Activated CD4-positive, alpha-beta memory T cell treated with anti-CD3 and anti-CD28 coated beads for 36 hours (primary cell): ENCODE measurements at regions of chr17 and their contacts with region 1.

Region 1: GRCh38 chr17:81394921-81395599 is at the start of gene BAHCC1:
- DNase-seq: peak; percentile 94
- H3K4me3 Mint-ChIP-seq: peak within 1 kb of the TSS; percentile 53
- H3K27ac Mint-ChIP-seq: peak within 1 kb of the TSS; percentile 73
- H3K4me1 Mint-ChIP-seq: peaks cover 24% of the 10 kb centered on the region
- H3K27me3 Mint-ChIP-seq: peaks cover 48% of the 10 kb centered on the region
- total RNA-seq, gene BAHCC1: 0.10 TPM in 1 of 2 experiments, not detected in the other

Region 2: DNA sequence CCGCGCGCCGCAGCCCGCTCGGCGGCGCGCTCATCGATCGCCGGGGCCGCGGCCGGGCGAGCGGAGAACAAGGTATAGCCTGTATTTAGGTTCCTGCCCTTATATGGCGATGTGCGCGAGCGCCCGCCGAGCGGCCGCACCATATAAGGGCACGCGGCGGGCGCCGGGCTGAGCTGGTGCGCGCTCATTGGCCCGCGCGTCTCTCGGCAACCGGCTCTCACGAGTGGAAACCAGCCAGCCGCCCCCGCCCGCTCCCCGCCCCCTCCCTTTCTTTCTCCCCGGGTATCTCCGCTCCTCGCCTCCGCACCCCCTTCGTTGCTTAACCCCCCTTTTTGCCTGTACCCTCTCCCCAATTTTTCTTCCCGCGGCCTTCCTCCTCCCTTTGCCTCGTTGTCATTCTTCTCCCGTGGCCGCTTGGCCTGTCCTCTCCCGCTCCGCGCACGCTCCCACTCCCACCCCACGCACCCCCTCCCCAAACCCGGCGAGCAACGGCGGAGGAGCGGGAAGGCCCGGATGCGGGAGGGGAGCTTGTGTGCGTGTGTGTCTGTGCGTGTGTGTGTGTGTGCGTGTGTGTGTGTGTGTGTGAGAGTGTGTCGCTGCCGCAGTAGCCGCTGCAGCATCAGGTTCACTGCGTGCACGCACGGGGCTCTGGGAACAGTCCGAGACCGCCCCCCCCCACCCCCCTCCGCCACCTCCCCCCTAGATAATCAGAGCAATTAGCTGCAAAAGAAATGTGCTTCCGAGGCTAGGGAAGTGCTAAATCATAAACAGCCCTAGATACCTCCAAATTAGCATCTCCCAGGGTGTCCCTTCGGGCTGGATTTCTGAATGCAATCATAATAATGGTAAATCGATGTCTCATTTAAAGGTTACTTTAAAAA is 1584.7 kb before region 1 on chr17:
- CTCF ChIA-PET with region 1: no interaction called
- POLR2A ChIA-PET with region 1: no interaction called
- intact Hi-C with region 1: loop called (anchors 5 kb)
- DNase-seq: peak; percentile 87
- H3K4me3 Mint-ChIP-seq: peak overlapping the region; percentile 23
- H3K27ac Mint-ChIP-seq: no peak overlapping the region
- H3K4me1 Mint-ChIP-seq: peaks cover 33% of the 10 kb centered on the region
- H3K27me3 Mint-ChIP-seq: peaks cover 64% of the 10 kb centered on the region

Region 3: DNA sequence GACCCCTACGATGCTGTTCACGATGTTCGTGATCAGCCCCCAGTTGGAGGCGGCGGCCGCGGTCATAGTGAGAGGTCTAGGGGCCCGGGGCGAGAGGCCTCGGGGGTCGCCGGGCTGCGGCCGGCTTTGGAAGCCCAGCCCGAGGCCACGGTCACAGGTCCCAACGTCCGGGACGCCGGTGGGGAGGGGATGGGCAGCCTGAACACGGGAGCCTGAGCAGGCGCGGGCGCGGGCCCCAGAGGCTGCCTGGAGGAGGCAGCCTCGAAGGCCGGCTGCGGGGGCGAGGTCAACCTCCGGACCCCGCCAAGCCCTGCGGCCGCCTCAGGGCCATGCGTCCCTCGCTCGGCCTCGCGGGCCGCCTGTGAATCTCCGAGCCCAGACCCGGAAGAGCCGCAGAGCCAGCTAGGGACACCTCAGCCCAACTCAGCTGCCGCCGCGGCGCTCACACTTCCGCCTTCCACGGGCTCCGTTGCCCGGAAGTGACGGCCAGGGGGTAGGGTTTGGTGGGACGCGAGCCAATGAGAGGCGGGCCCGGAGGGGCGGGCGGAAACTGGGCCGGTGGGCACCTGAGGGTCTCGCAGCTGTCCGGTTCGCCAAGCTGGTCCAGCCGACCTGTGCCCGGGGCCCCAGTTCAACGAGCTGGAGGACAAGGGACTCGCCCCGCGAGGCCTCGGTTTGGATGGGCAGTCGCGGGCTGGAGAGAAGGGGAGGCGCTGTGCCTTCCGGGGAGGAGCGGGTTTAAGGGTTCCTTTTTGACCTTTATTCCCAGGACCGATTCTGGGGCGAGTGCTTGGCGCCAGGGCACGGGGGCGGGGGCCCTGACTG is 100.0 kb before region 1 on chr17 and contains the start of gene SLC38A10:
- CTCF ChIA-PET with region 1: interaction called, 4 read pairs
- POLR2A ChIA-PET with region 1: no interaction called
- intact Hi-C with region 1: loop called (anchors 5 kb)
- DNase-seq: peak; percentile 95
- H3K4me3 Mint-ChIP-seq: peak within 1 kb of the TSS; percentile 94
- H3K27ac Mint-ChIP-seq: peak within 1 kb of the TSS; percentile 92
- H3K4me1 Mint-ChIP-seq: peaks cover 39% of the 10 kb centered on the region
- H3K27me3 Mint-ChIP-seq: no peaks in the 10 kb centered on the region
- total RNA-seq, gene SLC38A10: 60.7 to 60.9 TPM

Region 4: GRCh38 chr17:81346090-81346907 is 48.8 kb before region 1 on chr17:
- CTCF ChIA-PET with region 1: no interaction called
- POLR2A ChIA-PET with region 1: interaction called, 3 read pairs
- intact Hi-C with region 1: loop called (anchors 1 kb)
- DNase-seq: peak; percentile 96
- H3K4me3 Mint-ChIP-seq: peak overlapping the region; percentile 37
- H3K27ac Mint-ChIP-seq: no peak overlapping the region
- H3K4me1 Mint-ChIP-seq: peaks cover 21% of the 10 kb centered on the region
- H3K27me3 Mint-ChIP-seq: peaks cover 23% of the 10 kb centered on the region

Region 5: DNA sequence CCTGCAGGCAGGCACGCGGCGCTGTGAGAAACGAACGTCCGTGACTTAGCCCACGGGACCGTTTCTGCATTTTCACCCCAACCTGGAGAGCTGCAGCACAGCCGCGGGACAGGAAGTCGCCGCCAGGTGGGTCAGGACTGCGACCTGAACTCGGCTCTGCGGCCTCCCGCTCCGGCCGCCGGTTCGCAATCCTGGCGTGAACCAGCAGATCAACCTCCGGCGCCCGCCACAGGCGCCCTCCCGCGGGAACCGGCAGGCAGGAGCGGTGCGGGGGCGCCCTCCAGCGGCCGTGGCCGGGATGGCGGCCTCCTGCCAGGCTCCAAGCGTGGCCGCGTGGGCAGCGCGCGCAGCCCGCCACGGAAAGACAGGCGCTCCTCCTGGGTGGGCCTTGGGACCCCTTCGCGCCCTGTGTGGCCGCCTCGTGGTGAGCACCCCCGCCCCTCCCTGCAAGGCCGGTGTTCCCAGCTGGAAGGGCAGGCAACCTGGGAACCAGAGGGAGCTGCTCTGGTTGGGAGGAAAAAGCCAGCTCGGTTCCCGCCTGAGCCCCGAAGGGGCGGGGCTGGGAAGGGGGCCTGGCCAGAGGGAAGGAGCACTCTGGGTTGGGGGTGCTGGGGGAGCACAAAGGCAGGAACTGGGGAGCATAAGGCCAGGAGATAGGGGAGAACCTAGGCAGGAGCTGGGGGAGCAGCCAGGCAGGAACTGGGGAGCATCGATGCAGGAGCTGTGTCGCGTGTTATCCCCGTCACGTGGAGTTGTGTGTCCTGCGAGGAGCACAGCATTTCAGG is 89.3 kb after region 1 on chr17:
- CTCF ChIA-PET with region 1: interaction called, 10 read pairs
- POLR2A ChIA-PET with region 1: no interaction called
- intact Hi-C with region 1: loop called (anchors 5 kb)
- DNase-seq: peak; percentile 91
- H3K4me3 Mint-ChIP-seq: peak overlapping the region; percentile 29
- H3K27ac Mint-ChIP-seq: no peak overlapping the region
- H3K4me1 Mint-ChIP-seq: peaks cover 11% of the 10 kb centered on the region
- H3K27me3 Mint-ChIP-seq: peaks cover 31% of the 10 kb centered on the region

Region 6: DNA sequence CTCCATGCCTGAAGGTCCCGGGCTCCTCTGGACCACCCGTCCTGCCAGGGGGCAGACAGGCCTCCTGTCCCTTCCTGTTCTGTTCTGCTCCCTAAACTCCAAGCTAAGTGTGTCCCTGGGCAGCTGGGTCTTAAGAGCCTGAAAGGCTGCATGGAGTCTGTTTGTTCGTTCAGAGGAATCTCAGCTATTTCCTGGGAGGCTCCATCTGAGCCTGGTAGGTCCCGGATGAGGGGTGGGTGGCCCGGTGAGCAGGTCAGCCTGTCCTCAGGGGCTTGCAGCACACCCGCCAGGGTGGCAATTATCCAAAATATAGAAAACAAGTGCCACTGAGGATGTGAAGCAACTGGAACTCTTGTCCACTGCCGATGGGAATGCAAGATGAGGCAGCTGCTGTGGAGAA is 105.0 kb after region 1 on chr17:
- CTCF ChIA-PET with region 1: no interaction called
- POLR2A ChIA-PET with region 1: no interaction called
- intact Hi-C with region 1: no loop called
- DNase-seq: no peak
- H3K4me3 Mint-ChIP-seq: no peak overlapping the region
- H3K27ac Mint-ChIP-seq: no peak overlapping the region
- H3K4me1 Mint-ChIP-seq: no peaks in the 10 kb centered on the region
- H3K27me3 Mint-ChIP-seq: no peaks in the 10 kb centered on the region

Region 7: DNA sequence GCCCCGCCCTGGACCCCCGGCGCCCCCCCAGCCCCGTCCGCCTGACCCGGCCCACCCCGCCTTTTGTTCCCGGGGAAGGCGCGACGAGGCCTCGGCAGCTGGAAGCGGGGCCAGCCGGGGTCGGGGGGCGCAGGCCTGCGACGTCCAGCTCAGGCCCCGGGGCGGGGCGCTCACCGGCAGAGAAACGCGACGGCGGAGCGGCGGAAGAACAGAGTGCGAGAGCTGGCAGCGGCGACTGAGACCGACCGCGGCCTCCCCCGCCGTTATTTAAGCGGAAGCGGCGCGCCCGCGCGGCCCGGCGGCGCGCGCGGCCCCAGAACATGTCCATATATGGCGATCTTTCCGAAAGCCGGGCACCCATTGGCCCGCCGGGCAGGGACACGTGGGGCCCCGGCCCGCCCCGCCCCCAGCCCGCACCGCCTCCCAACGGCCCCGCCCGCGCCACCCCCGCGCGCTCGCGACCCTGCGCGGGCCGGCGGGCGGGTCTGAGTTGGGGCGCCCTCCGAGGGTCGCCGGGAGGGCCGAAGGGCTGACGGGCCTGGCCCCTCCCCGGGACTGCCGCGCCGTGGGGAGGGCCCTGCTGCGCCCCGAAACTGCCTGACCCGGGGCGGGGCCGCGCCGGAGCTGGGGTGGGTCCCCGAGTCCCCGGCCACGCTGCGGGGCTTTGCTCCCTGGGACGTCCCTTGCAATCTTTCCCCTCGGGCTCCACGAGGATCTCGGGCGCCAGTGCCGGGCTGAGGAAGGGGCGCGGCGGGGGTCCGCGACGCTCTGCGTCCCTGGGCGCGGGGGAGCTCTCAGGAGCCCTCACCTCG is 117.7 kb after region 1 on chr17 and contains the start of gene ACTG1:
- CTCF ChIA-PET with region 1: no interaction called
- POLR2A ChIA-PET with region 1: no interaction called
- intact Hi-C with region 1: loop called (anchors 1 kb)
- DNase-seq: peak; percentile 93
- H3K4me3 Mint-ChIP-seq: peak within 1 kb of the TSS; percentile 89
- H3K27ac Mint-ChIP-seq: peak within 1 kb of the TSS; percentile 92
- H3K4me1 Mint-ChIP-seq: peaks cover 30% of the 10 kb centered on the region
- H3K27me3 Mint-ChIP-seq: no peaks in the 10 kb centered on the region
- total RNA-seq, gene ACTG1: 3,773 to 3,928 TPM